ENCODE measurements at regions of chr1 and their contacts with region 1.

Region 1: DNA sequence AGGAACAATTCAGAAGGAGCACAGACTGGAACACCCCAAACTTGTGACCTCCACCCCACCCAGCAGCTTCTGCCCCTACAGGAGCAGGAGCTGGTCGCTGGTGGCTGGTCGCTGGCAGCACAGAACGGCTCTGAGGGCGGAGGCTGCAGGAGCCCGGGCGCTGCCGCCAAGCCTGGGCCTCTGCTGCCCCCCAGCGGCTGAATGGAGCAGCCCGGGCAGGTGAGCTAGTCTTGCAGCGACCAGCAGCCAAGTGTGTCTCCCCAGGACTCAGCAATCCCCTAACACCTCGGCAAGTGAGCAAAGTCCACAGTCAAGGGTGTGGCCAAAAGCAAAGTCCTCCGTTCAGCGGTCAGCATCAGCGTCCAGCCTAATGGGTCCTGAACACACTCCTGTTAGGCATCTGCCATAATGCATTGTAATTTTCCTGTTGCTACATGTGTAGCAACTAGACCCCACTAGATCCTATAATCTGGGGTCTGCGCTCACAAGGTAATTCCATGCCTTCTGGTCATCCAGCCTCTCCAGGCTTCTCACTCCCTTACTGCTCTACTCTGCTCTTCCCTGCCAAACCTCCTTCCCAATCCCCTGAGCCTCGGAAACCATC is 12.1 kb upstream of the GJB5 start:
- DNase-seq: peak; percentile 40 to 81 (median 68)
- ATAC-seq: peak; percentile 73
- H3K4me3 ChIP-seq: no peak overlapping the region
- H3K4me3 Mint-ChIP-seq: no peak overlapping the region
- H3K27ac ChIP-seq: no peak overlapping the region
- H3K27ac Mint-ChIP-seq: no peak overlapping the region
- H3K4me1 ChIP-seq: peaks cover 7% of the 10 kb centered on the region
- H3K4me1 Mint-ChIP-seq: no peaks in the 10 kb centered on the region
- H3K27me3 ChIP-seq: no peaks in the 10 kb centered on the region
- H3K27me3 Mint-ChIP-seq: peaks cover under 1% of the 10 kb centered on the region
- CTCF ChIP-seq: peak; percentile 85

Region 2: GRCh38 chr1:33633019-33633801 is 1109.6 kb before region 1 on chr1:
- CTCF ChIA-PET with region 1: interaction called, 11 read pairs
- POLR2A ChIA-PET with region 1: no interaction called
- intact Hi-C with region 1: loop called (anchors 1 to 2 kb)
- DNase-seq: peak; percentile 69 to 87 (median 79)
- ATAC-seq: peak; percentile 91
- H3K4me3 ChIP-seq: no peak overlapping the region
- H3K4me3 Mint-ChIP-seq: no peak overlapping the region
- H3K27ac ChIP-seq: no peak overlapping the region
- H3K27ac Mint-ChIP-seq: no peak overlapping the region
- H3K4me1 ChIP-seq: peaks cover 4% of the 10 kb centered on the region
- H3K4me1 Mint-ChIP-seq: peaks cover 4% of the 10 kb centered on the region
- H3K27me3 ChIP-seq: peaks cover 3 to 12% of the 10 kb centered on the region in 2 experiments
- H3K27me3 Mint-ChIP-seq: peaks cover 47% of the 10 kb centered on the region
- CTCF ChIP-seq: peak; percentile 98

Region 3: GRCh38 chr1:34460193-34460592 is 282.6 kb before region 1 on chr1:
- CTCF ChIA-PET with region 1: no interaction called
- POLR2A ChIA-PET with region 1: no interaction called
- intact Hi-C with region 1: loop called (anchors 1 kb)
- DNase-seq: peak in 10 of 14 experiments; percentile 2 to 50 (median 14)
- ATAC-seq: no peak
- H3K4me3 ChIP-seq: no peak overlapping the region
- H3K4me3 Mint-ChIP-seq: no peak overlapping the region
- H3K27ac ChIP-seq: no peak overlapping the region
- H3K27ac Mint-ChIP-seq: no peak overlapping the region
- H3K4me1 ChIP-seq: no peaks in the 10 kb centered on the region
- H3K4me1 Mint-ChIP-seq: no peaks in the 10 kb centered on the region
- H3K27me3 ChIP-seq: peaks cover 0 to 2% of the 10 kb centered on the region in 2 experiments
- H3K27me3 Mint-ChIP-seq: peaks cover 41% of the 10 kb centered on the region
- CTCF ChIP-seq: peak; percentile 56